IMR-90 (cell line): ENCODE measurements at regions of chr4 and their contacts with region 1.

Region 1: GRCh38 chr4:4995103-4995907 is 24.0 kb downstream of the CYTL1 start:
- DNase-seq: peak; percentile 58
- ATAC-seq: peak; percentile 83
- H3K4me3 ChIP-seq: no peak overlapping the region
- H3K27ac ChIP-seq: no peak overlapping the region
- H3K4me1 ChIP-seq: peaks cover 12% of the 10 kb centered on the region
- H3K27me3 ChIP-seq: no peaks in the 10 kb centered on the region; the same call in 1 of the 2 replicates
- CTCF ChIP-seq: peak; percentile 86
- POLR2A ChIP-seq: 0 out of 2 replicates have a peak, but pooled peaks have one; percentile 20
- RAD21 ChIP-seq: peak; percentile 92

Region 2: DNA sequence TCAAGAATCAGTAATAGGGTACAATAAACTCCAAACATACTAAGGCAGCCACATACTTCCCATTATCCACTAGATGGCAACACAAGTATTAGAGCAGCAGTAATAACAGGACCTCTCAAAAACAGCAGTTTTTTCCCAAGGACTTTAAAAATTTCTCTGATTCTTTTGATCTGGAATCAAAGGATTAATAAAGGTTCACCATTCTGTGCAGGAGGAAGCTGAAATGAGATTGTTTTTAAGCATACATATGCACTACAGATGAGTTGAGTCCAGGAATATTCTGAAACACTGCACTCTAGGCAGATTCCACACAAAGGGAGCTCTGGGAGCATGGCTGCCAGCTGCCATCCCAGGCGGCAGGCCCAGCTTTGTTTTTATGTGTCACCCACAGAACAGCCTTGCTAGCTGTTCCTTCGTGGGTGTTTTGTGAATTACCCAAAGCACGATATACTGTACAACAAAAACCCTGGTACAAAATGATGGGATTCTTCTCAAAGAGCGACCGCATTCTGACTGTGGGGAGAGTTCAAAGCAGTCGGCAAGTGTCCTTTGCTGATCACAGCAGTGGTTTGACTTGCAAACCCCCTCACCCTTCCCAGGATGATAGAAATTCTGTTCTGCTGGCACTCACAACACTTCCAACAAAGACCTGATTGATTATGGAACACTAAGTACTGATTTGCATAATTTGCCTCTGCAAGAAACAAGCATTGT is 514.5 kb before region 1 on chr4:
- CTCF ChIA-PET with region 1: no interaction called
- POLR2A ChIA-PET with region 1: no interaction called
- dilution Hi-C with region 1: no loop called
- in situ Hi-C with region 1: loop called (anchors 10 kb)
- intact Hi-C with region 1: loop called (anchors 2 kb)
- DNase-seq: peak; percentile 41
- ATAC-seq: peak; percentile 79
- H3K4me3 ChIP-seq: no peak overlapping the region
- H3K27ac ChIP-seq: no peak overlapping the region
- H3K4me1 ChIP-seq: peaks cover 13% of the 10 kb centered on the region
- H3K27me3 ChIP-seq: no peaks in the 10 kb centered on the region
- CTCF ChIP-seq: peak; percentile 58
- POLR2A ChIP-seq: no peak
- RAD21 ChIP-seq: peak; percentile 48

Region 3: GRCh38 chr4:4677556-4678522 is 317.5 kb before region 1 on chr4:
- CTCF ChIA-PET with region 1: no interaction called
- POLR2A ChIA-PET with region 1: no interaction called
- dilution Hi-C with region 1: no loop called
- in situ Hi-C with region 1: no loop called
- intact Hi-C with region 1: loop called (anchors 10 kb)
- DNase-seq: peak; percentile 59
- ATAC-seq: peak; percentile 90
- H3K4me3 ChIP-seq: peak overlapping the region; percentile 23; the same call in 1 of the 2 replicates
- H3K27ac ChIP-seq: no peak overlapping the region
- H3K4me1 ChIP-seq: no peaks in the 10 kb centered on the region; the same call in 1 of the 2 replicates
- H3K27me3 ChIP-seq: peaks cover 9% of the 10 kb centered on the region
- CTCF ChIP-seq: peak; percentile 64
- POLR2A ChIP-seq: no peak
- RAD21 ChIP-seq: peak; percentile 69

Region 4: GRCh38 chr4:5050520-5051277 is 55.4 kb after region 1 on chr4:
- CTCF ChIA-PET with region 1: interaction called, 3 read pairs
- POLR2A ChIA-PET with region 1: interaction called, 6 read pairs
- dilution Hi-C with region 1: no loop called
- in situ Hi-C with region 1: no loop called
- intact Hi-C with region 1: loop called (anchors 1 kb)
- DNase-seq: peak; percentile 83
- ATAC-seq: peak; percentile 76
- H3K4me3 ChIP-seq: peak overlapping the region; percentile 53
- H3K27ac ChIP-seq: peak overlapping the region; percentile 61
- H3K4me1 ChIP-seq: peaks cover 2% of the 10 kb centered on the region; the same call in 1 of the 2 replicates
- H3K27me3 ChIP-seq: no peaks in the 10 kb centered on the region
- CTCF ChIP-seq: peak; percentile 85
- POLR2A ChIP-seq: peak; percentile 6; the same call in 1 of the 2 replicates
- RAD21 ChIP-seq: peak; percentile 90

Region 5: DNA sequence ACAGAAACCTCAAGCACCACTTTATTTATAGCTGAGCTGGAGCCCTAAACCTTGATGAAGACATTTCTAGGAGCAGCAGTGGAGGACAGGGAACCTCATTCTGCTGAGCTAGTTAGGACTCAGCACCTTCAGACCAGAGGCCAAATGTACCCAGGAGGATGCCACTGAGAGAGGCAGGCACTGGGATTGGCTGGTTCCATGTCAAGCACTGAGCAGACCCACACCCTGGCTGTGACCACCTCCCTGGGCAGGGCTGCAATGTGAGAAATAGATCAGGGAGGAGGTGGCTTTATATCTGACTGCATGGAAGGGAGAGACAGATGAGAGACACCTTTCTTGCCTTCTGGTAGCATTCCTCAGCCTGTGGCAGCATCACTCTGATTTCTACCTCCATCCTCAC is 360.5 kb after region 1 on chr4:
- CTCF ChIA-PET with region 1: no interaction called
- POLR2A ChIA-PET with region 1: no interaction called
- dilution Hi-C with region 1: no loop called
- in situ Hi-C with region 1: no loop called
- intact Hi-C with region 1: no loop called
- DNase-seq: no peak
- ATAC-seq: no peak
- H3K4me3 ChIP-seq: no peak overlapping the region
- H3K27ac ChIP-seq: no peak overlapping the region
- H3K4me1 ChIP-seq: no peaks in the 10 kb centered on the region
- H3K27me3 ChIP-seq: no peaks in the 10 kb centered on the region
- CTCF ChIP-seq: no peak
- POLR2A ChIP-seq: no peak
- RAD21 ChIP-seq: no peak

Region 6: DNA sequence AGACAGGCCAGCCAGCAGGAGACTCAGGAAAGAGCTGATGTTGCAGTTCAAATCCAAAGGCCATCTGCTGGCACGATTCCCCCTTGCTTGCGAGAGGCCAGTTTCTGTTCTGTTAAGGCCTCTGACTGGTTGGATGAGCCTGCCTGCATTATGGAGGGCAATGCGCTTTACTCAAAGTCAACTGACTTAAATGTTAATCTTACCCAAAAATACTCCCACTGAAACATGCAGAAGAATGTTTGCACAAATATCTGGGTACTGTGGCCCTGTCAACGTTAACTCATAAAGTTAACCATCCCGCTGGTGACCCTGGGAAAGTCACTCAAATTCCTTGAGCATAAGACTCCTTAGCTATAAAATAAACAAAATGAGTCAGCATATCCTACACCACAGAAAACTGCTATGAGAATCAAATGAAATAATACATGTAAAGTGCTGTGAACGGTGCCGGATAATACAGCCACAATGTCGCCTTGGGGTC is 386.7 kb after region 1 on chr4:
- CTCF ChIA-PET with region 1: no interaction called
- POLR2A ChIA-PET with region 1: no interaction called
- dilution Hi-C with region 1: no loop called
- in situ Hi-C with region 1: no loop called
- intact Hi-C with region 1: loop called (anchors 5 kb)
- DNase-seq: peak; percentile 94
- ATAC-seq: peak; percentile 70
- H3K4me3 ChIP-seq: no peak overlapping the region
- H3K27ac ChIP-seq: peak overlapping the region; percentile 86
- H3K4me1 ChIP-seq: peaks cover 29% of the 10 kb centered on the region
- H3K27me3 ChIP-seq: no peaks in the 10 kb centered on the region
- CTCF ChIP-seq: no peak
- POLR2A ChIP-seq: 0 out of 2 replicates have a peak, but pooled peaks have one; percentile 11
- RAD21 ChIP-seq: no peak

Region 7: DNA sequence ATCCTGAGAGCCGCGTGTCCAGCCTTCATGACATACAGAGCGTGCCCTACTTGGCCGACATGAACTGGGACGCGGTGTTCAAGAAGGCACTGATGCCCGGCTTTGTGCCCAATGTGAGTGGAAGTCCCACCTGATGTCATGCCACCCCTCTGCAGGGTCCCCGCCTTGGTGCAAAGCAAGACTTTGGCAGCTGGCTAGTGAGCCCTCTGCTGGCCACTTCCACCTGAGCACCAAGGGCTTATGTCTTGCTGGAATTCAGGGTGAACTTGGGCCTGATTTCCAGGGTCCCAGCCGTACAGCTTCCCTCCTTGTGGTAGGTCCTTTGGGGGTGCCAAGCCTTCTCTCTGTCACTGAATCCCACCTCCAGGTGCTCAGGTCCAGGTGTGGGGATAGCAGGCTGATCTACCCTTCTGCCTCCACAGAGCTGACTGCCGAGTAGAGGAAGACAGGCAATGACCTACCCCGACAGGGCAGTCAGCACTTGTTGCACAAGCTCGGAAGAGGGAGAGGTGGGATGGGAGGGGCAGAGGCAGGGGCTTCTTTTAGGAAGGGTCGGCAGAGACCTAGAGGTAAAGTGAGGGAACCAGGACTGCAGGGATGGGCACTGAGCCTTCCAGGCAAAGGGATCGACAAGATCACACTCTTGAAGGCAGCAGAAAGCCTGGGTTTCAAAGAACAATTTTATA is 465.0 kb after region 1 on chr4:
- CTCF ChIA-PET with region 1: interaction called, 3 read pairs
- POLR2A ChIA-PET with region 1: no interaction called
- dilution Hi-C with region 1: no loop called
- in situ Hi-C with region 1: loop called (anchors 10 kb)
- intact Hi-C with region 1: loop called (anchors 1 kb)
- DNase-seq: peak; percentile 37
- ATAC-seq: peak; percentile 81
- H3K4me3 ChIP-seq: no peak overlapping the region
- H3K27ac ChIP-seq: no peak overlapping the region
- H3K4me1 ChIP-seq: no peaks in the 10 kb centered on the region
- H3K27me3 ChIP-seq: no peaks in the 10 kb centered on the region
- CTCF ChIP-seq: peak; percentile 54
- POLR2A ChIP-seq: no peak
- RAD21 ChIP-seq: peak; percentile 48

Region 8: DNA sequence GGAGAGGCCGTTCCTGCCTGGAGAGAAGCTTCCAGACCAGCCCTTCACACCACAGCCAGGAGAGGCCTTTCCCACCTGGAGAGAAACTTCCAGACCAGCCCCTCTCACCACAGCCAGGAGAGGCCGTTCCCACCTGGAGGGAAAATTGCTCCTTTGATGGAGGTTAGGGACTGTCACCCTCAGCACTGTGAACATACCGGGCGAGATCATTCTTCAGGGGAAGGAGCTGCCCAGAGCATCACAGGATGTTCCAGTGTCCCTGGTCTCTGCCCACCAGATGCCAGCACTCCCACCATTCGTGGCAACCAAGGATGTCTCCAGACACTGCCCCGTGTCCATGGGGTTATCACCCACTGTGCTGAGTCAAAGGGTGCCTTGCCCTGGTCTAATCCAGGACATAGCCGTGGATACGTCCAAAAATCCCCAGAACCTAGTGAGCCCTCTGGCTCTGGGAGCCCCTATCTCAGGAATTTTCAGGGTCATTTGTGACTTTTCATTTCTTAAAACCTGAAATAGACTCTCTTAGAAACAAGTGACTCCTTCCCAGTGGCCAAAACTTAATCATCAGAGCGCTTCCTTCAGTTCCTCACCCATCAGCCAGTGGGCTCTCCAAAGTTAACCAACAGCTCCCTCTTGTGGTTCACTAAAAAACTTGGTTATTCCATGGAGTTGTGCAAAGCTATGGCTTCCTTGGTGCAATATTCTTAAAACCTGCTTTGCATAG is 817.4 kb after region 1 on chr4:
- CTCF ChIA-PET with region 1: no interaction called
- POLR2A ChIA-PET with region 1: no interaction called
- dilution Hi-C with region 1: no loop called
- in situ Hi-C with region 1: no loop called
- intact Hi-C with region 1: loop called (anchors 1 kb)
- DNase-seq: peak; percentile 80
- ATAC-seq: peak; percentile 93
- H3K4me3 ChIP-seq: no peak overlapping the region
- H3K27ac ChIP-seq: no peak overlapping the region
- H3K4me1 ChIP-seq: no peaks in the 10 kb centered on the region
- H3K27me3 ChIP-seq: no peaks in the 10 kb centered on the region
- CTCF ChIP-seq: peak; percentile 84
- POLR2A ChIP-seq: no peak
- RAD21 ChIP-seq: peak; percentile 83